Sigmoid colon (tissue), 7 donors: ENCODE measurements at regions of chrX and their contacts with region 1.

Region 1: DNA sequence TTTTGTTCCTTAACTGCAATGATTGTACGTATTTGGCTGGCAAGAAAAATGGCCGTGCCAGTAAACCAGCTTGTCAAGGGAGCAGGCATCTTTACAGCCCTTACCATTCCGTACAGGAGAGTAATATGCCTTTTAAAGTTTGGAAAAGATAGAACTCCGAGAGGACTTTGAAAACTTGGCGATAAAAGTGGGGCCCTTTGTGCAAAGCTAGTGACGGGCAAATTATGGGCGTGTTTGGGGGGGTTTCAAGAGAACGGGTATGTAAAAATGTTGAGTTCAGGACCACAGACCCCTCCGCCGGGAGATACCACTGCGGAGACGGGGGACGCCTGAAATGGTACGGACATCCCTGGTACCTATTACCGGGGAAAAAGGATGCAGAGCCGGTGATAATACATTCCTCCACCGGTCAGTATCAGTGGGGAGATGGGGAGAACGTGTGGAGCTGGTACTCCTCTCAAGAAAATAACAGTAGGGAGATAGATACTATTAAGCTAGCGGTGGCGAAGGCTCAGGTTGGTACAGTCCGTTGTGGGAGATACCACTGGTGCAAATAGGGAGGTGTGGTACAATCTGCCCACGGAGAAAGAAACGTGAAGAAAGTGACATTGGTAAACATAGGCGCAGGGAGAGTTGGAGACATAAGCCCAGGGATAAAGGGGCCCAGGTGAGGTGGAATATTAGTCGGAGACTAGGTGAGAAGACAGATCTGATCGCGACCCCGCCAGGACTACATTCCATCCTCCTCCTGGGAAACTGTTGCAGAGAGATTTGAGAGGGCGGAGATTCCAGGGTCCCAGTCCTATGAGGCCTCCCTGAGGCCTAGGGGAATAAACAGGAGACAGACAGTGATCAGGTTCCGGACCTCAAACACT is 14.5 kb downstream of the SPACA5 start:
- DNase-seq: peak; percentile 78
- H3K4me3 ChIP-seq: peak overlapping the region; percentile 42 to 57 (median 51)
- H3K27ac ChIP-seq: peak overlapping the region; percentile 78 to 88 (median 83)
- H3K4me1 ChIP-seq: no peaks in the 10 kb centered on the region
- H3K27me3 ChIP-seq: no peaks in the 10 kb centered on the region
- CTCF ChIP-seq: no peak
- EP300 ChIP-seq: no peak
- POLR2A ChIP-seq: no peak

Region 2: GRCh38 chrX:47540754-47541538 is 480.3 kb before region 1 on chrX:
- intact Hi-C with region 1: loop called (anchors 10 kb)
- DNase-seq: peak; percentile 93
- H3K4me3 ChIP-seq: no peak overlapping the region
- H3K27ac ChIP-seq: peak overlapping the region; percentile 72 to 81 (median 78)
- H3K4me1 ChIP-seq: peaks cover 0 to 18% (median 2%) of the 10 kb centered on the region in 4 donors
- H3K27me3 ChIP-seq: no peaks in the 10 kb centered on the region
- CTCF ChIP-seq: peak; percentile 31 to 60 (median 45)
- EP300 ChIP-seq: peak in 1 of 4 donors; percentile 39
- POLR2A ChIP-seq: no peak

Region 3: DNA sequence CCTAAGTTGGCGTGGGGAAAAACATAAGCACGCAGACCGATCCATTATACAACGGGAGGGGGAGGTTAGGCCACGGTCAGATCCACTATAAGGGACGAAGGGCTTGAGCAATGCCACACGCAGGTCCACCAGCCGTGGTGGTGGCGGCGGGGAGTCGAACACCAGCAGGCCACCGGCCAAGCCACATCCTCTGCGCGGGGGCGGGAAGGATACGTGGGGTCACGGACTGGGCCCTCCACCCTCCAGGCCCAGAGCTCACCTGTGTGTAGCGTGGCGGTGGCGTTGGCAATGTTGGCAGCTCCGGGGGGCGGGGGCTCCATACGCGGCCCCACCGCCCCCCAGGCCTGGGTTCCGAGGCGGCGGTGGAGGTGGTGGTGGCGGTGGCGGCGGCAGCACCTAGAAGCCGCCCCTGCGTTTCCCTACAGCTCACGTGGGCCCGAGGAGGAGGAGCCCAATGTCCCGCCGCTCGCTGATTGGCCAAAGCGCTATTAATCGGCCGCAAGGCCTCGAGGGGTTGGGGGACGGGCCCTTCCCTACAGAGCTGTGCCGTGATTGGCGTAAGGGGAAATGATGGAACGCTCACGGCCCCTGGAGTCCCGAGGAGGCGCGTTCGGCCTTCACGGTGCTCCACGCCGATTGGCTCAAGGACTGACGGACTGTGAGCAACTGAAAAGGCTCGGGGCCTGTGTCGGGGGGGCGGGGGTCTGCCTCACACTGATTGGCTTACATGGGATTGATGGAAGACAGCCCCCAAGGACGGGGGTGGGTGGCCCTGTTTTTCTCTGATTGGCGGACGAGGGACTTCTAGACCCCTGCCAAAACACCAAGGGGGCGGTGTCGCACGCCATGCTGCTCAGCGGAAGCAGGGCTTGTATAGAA is 370.9 kb before region 1 on chrX and contains the start of gene ELK1:
- intact Hi-C with region 1: loop called (anchors 10 kb)
- DNase-seq: peak; percentile 99
- H3K4me3 ChIP-seq: peak within 1 kb of the TSS; percentile 51 to 73 (median 70)
- H3K27ac ChIP-seq: peak within 1 kb of the TSS; percentile 86 to 92 (median 88)
- H3K4me1 ChIP-seq: peaks cover 0 to 18% (median 12%) of the 10 kb centered on the region in 4 donors
- H3K27me3 ChIP-seq: no peaks in the 10 kb centered on the region
- CTCF ChIP-seq: no peak
- EP300 ChIP-seq: no peak
- POLR2A ChIP-seq: peak; percentile 43 to 50
- total RNA-seq, gene ELK1: 12.1 to 18.8 (median 16.8) TPM

Region 4: DNA sequence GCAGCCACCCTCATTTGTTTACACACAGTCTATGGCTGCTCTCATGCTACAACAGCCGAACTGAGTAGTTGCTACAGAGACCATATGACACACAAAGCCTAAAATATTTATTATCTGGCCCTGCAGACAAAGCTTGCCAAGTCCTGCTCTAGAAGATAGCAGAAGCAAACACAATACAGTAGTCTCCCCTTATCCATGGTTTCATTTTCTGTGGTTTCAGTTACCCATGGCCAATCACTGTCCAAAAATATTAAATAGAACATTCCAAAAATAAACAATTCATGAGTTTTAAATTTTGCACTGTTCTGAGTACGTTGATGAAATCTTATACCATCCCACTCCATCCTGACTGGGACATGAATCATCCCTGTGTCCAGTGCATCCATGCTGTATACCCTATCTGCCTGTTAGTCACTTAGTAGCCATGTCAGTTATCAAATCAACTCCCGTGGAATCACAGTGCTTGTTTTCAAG is 224.8 kb before region 1 on chrX:
- intact Hi-C with region 1: no loop called
- DNase-seq: no peak
- H3K4me3 ChIP-seq: no peak overlapping the region
- H3K27ac ChIP-seq: no peak overlapping the region
- H3K4me1 ChIP-seq: no peaks in the 10 kb centered on the region
- H3K27me3 ChIP-seq: no peaks in the 10 kb centered on the region
- CTCF ChIP-seq: no peak
- EP300 ChIP-seq: no peak
- POLR2A ChIP-seq: no peak

Region 5: DNA sequence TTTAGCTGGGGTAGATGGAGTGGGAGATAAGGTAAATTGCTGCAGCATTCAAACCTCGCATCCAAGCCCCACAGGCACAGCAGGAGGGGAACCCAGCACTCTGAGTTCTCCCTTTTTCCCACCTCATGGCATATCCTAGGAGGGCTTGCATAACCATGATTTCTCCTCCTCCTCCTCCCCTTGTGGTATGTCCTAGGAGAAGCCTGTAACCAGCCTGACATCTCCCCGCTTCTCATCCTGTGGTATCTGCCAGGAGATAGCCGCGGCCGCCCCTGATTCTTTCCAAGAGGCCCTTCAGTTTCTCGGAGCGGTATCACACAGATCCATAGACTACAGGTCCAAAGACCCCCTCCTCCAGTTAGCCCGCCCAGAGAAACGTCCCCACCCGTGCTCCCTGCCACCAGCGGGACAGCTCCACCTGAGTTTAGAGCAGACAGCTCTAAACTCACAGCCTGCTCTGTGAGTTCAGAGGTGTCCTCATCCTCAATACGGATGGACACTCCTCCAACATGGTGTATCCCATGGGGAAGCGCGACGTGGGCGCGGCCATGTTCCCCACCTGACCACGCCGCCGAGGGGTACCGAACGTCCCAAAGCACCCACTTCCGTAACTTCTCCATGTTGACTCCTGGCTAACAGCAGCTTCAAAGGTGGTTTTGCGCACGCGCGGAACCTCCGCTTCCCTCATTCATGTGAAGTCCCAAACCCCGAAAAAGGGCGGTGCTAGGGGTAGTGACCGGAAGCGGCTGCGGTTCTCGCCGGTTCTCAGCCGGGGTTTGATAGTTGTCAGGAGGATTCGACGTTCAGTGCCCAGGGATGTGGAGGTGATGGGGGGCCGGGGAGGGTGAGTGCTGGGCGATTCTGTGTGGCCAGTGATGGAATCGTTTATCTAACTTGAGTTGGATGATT is 184.8 kb before region 1 on chrX and contains the start of gene ZNF81:
- intact Hi-C with region 1: loop called (anchors 5 kb)
- DNase-seq: peak; percentile 98
- H3K4me3 ChIP-seq: peak within 1 kb of the TSS; percentile 29 to 54 (median 52)
- H3K27ac ChIP-seq: peak within 1 kb of the TSS; percentile 71 to 77 (median 74)
- H3K4me1 ChIP-seq: peaks cover 0 to 12% (median 0%) of the 10 kb centered on the region in 4 donors
- H3K27me3 ChIP-seq: no peaks in the 10 kb centered on the region
- CTCF ChIP-seq: no peak
- EP300 ChIP-seq: no peak
- POLR2A ChIP-seq: peak in 1 of 2 donors; percentile 6
- total RNA-seq, gene ZNF81: 4.4 to 16.0 (median 8.1) TPM

Region 6: DNA sequence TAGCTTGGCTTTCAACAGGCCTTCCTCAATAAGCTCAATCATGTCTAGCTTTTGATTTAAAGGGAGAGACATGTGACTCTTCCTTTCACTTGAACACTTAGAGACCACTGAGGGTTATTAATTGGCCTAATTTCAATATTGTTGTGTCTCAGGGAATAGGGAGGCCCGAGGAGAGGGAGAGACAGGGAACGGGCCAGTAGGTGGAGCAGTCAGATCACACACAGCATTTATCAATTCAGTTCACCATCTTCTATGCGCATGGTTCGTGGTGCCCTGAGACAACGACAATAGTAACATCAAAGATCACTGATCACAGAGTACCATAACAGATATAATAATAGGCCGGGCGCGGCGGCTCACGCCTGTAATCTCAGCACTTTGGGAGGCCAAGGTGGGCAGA is 166.8 kb before region 1 on chrX:
- intact Hi-C with region 1: loop called (anchors 5 kb)
- DNase-seq: no peak
- H3K4me3 ChIP-seq: no peak overlapping the region
- H3K27ac ChIP-seq: no peak overlapping the region
- H3K4me1 ChIP-seq: no peaks in the 10 kb centered on the region
- H3K27me3 ChIP-seq: no peaks in the 10 kb centered on the region
- CTCF ChIP-seq: no peak
- EP300 ChIP-seq: no peak
- POLR2A ChIP-seq: no peak